HEK293T (cell line): ENCODE measurements at regions of chr22 and their contacts with region 1.

Region 1: DNA sequence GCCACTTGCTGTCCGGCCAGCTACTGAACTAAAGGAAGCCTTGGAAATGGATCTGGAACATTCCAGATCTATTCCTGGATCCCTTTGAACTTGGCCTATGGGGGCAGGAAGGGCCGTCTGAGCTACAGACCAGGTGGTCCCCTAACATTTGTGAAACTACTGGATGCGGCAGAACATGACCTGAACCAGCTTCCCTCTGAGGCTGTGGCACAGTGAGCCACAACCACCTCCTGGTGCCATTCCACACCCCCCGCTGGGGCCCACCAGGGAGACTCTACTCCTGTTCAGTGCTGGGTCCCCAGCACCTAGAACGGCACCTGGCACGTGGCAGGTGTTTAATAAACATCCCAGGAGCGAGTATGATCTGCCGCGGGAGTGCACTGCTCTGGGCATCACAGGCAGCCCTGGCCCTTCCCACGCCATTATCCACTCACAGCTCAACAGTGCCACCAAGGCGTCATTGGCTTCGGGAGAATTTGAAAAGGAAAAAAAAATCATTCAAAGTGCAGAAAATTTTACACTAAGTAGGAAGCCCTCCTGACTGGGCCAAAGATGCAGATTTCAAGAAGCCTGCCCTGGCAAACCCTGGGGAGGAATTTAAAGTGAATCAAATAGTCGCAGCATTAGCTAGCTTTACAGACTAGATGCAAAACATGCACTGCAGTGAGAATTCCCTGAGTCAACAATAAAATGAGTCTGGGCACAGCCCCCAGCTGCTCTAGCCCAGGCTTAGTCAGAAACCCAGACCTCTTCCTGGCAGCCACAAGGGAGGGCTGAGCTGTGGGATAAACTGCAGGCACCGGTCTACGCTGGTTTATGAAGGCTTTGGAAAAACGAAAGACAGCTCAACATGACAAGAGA is 14.3 kb upstream of the EFCAB6 start:
- DNase-seq: no peak

Region 2: GRCh38 chr22:43796567-43796966 is 29.8 kb before region 1 on chr22:
- CTCF ChIA-PET with region 1: no interaction called
- POLR2A ChIA-PET with region 1: no interaction called
- DNase-seq: peak; percentile 33

Region 3: GRCh38 chr22:43812149-43812842 is 14.1 kb before region 1 on chr22 and contains the start of gene EFCAB6:
- CTCF ChIA-PET with region 1: no interaction called
- POLR2A ChIA-PET with region 1: interaction called, 13 read pairs
- DNase-seq: peak; percentile 96

Region 4: DNA sequence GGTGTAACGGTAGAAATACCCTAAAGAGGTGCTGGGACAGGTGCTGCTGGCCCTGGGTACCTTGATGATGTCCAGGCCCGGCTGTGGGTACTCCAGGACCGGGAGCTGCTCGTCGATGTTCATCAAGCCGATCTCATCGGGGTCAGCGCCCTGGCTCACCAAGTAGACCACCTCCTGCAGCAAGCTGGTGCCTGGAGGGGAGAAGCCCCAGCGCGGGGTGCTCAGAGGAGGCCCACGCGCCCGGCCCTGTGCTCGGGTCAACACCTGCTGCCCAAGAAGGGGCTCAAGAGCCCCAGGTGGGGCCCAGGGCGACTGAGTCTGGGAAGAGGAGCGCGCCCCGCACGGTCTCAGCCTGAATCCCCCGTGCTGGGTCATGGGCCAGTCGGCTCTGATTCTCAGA is 15.4 kb after region 1 on chr22:
- CTCF ChIA-PET with region 1: no interaction called
- POLR2A ChIA-PET with region 1: no interaction called
- DNase-seq: no peak